Left ventricle myocardium superior (tissue), 1 donor: ENCODE measurements at regions of chr10 and their contacts with region 1.

Region 1: DNA sequence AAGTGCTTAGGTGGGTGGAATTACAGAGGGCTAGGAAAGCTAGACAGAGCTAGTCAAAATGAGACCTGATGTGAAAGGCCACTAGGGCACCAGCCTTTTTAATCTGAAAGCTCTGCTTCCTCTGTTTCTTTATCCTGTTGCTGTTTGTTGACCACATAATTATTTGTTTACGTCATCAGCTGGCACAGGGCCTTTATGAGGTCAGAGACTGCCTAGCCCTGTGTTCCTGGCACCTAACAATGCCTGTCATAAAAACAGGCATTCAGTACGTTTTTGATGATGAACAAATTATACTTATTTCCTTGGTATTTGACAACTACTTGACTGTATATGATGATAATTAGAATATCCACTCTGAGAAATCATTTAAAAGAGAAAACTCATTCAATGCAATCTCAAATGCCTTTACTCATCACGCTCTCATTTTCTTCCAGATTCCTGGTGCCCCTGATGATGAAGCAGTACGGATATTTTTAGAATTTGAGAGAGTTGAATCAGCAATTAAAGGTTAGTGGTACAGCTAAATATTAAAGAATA is 26.0 kb downstream of the RBM17 start:
- DNase-seq: no peak
- ATAC-seq: peak; percentile 31

Region 2: GRCh38 chr10:6089391-6090219 is 25.3 kb before region 1 on chr10:
- intact Hi-C with region 1: loop called (anchors 2 kb)
- DNase-seq: no peak
- ATAC-seq: no peak

Region 3: GRCh38 chr10:6202684-6203330 is 87.9 kb after region 1 on chr10 and contains the start of gene PFKFB3:
- intact Hi-C with region 1: loop called (anchors 10 kb)
- DNase-seq: peak; percentile 98
- ATAC-seq: peak; percentile 93
- total RNA-seq, gene PFKFB3: 30.8 TPM